HepG2 (cell line): ENCODE measurements at regions of chr9 and their contacts with region 1.

Region 1: DNA sequence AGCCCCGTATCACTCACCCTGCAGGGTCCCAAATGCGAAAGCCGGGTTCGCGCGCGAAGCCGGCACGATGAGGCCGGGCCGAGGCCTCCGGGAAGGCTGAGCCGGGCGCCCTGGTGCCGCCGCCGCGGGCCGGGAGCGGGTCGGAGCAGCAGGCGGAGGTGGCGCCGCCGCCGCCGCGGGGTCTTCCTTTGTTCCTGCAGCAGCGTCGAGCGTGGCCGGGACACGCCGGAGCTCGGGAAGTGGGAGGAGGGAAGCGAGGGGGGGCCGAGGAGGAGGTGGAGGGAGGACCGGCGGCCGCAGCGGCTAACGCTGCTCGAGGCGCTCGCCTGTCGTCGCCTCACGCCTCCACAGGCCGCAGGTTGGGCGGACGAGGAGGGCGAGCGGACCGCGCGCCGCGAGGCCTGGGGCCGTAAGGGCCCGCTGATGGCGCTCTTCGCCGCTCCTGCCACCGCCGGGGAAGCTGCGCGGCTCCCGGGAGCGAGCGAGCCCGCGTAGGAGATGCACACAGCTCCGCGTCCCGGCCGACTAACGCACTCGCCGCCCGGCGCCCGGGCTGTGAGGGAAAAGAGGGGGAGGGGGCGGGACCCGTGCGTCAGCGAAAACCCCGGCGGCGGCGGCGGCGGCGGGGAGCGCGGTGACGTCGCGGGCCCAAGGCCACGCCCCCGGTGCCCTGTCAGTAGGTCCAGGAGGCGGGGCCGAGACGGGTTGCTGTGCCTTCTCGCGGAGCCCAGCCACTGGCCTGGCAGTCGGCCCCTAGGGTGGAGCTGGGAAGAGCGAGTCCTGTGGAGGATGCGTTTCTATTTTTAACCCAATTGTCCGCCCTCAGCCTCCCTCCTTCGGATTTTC is at the start of gene ZFAND5:
- DNase-seq: peak; percentile 89
- ATAC-seq: peak; percentile 91
- H3K4me3 ChIP-seq: peak within 1 kb of the TSS; percentile 81 to 97 (median 95)
- H3K27ac ChIP-seq: peak within 1 kb of the TSS; percentile 99
- H3K4me1 ChIP-seq: peaks cover 54% of the 10 kb centered on the region
- H3K27me3 ChIP-seq: no peaks in the 10 kb centered on the region; a peak in 1 of 5 replicates
- CTCF ChIP-seq: no peak
- EP300 ChIP-seq: 0 out of 4 replicates have a peak, but pooled peaks of 1 of the 2 experiments have one; percentile 32
- POLR2A ChIP-seq: peak; percentile 99
- RAD21 ChIP-seq: peak; percentile 55
- total RNA-seq, gene ZFAND5: 41.8 and 60.2 TPM in 2 replicates

Region 2: GRCh38 chr9:71911253-71912074 is 453.4 kb before region 1 on chr9 and contains the start of gene C9orf85:
- CTCF ChIA-PET with region 1: no interaction called
- POLR2A ChIA-PET with region 1: interaction called, 8 read pairs
- in situ Hi-C with region 1: no loop called
- intact Hi-C with region 1: loop called (anchors 5 kb)
- DNase-seq: peak; percentile 100
- ATAC-seq: peak; percentile 86
- H3K4me3 ChIP-seq: peak within 1 kb of the TSS; percentile 86 to 99 (median 89)
- H3K27ac ChIP-seq: peak within 1 kb of the TSS; percentile 93
- H3K4me1 ChIP-seq: peaks cover 47% of the 10 kb centered on the region
- H3K27me3 ChIP-seq: no peaks in the 10 kb centered on the region; a peak in 1 of 5 replicates
- CTCF ChIP-seq: no peak
- EP300 ChIP-seq: peak; percentile 7 to 41; a peak in 2 of 4 replicates
- POLR2A ChIP-seq: peak in 1 of 2 experiments; percentile 24; a peak in 1 of 4 replicates
- RAD21 ChIP-seq: no peak
- total RNA-seq, gene C9orf85: 9.9 and 10.1 TPM in 2 replicates

Region 3: DNA sequence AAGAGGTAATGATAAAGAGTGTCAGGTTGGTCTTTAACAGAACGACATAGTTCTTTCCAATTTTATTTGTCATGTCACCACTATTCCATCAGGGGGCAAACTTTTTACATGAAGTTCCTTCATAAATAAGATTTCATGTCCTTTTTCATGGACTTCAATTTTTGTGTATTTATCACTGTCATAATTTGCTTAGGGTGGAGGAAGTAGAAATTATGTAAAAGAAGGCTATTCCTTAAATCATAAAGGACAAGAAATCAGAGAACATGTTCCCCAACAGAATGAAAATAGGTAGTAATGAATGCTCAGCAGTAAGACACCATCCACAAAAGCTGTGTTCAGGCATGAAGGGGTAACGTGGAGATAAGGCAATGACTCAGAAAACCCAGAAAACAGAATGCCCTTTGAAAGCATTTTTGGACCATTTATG is 72.6 kb before region 1 on chr9:
- CTCF ChIA-PET with region 1: no interaction called
- POLR2A ChIA-PET with region 1: interaction called, 6 read pairs
- in situ Hi-C with region 1: no loop called
- intact Hi-C with region 1: loop called (anchors 2 kb)
- DNase-seq: peak; percentile 30
- ATAC-seq: no peak
- H3K4me3 ChIP-seq: no peak overlapping the region
- H3K27ac ChIP-seq: no peak overlapping the region
- H3K4me1 ChIP-seq: peaks cover 12% of the 10 kb centered on the region
- H3K27me3 ChIP-seq: no peaks in the 10 kb centered on the region
- CTCF ChIP-seq: peak; percentile 52
- EP300 ChIP-seq: no peak
- POLR2A ChIP-seq: no peak
- RAD21 ChIP-seq: no peak

Region 4: GRCh38 chr9:72322259-72322658 is 42.6 kb before region 1 on chr9:
- CTCF ChIA-PET with region 1: no interaction called
- POLR2A ChIA-PET with region 1: no interaction called
- in situ Hi-C with region 1: no loop called
- intact Hi-C with region 1: no loop called
- DNase-seq: no peak
- ATAC-seq: no peak
- H3K4me3 ChIP-seq: no peak overlapping the region
- H3K27ac ChIP-seq: no peak overlapping the region
- H3K4me1 ChIP-seq: peaks cover 9% of the 10 kb centered on the region; the same call in 1 of the 2 replicates
- H3K27me3 ChIP-seq: no peaks in the 10 kb centered on the region
- CTCF ChIP-seq: no peak
- EP300 ChIP-seq: no peak
- POLR2A ChIP-seq: no peak
- RAD21 ChIP-seq: no peak

Region 5: GRCh38 chr9:72333709-72334108 is 31.2 kb before region 1 on chr9:
- CTCF ChIA-PET with region 1: no interaction called
- POLR2A ChIA-PET with region 1: no interaction called
- in situ Hi-C with region 1: no loop called
- intact Hi-C with region 1: no loop called
- DNase-seq: no peak
- ATAC-seq: no peak
- H3K4me3 ChIP-seq: no peak overlapping the region
- H3K27ac ChIP-seq: no peak overlapping the region
- H3K4me1 ChIP-seq: no peaks in the 10 kb centered on the region
- H3K27me3 ChIP-seq: 0 out of 5 replicates have a peak, but pooled peaks cover 0 to 2% of the 10 kb centered on the region in 2 experiments
- CTCF ChIP-seq: peak; percentile 37; the same call in 1 of the 2 replicates
- EP300 ChIP-seq: no peak
- POLR2A ChIP-seq: no peak
- RAD21 ChIP-seq: no peak

Region 6: GRCh38 chr9:72460342-72461312 is 95.7 kb after region 1 on chr9:
- CTCF ChIA-PET with region 1: no interaction called
- POLR2A ChIA-PET with region 1: interaction called, 12 read pairs
- in situ Hi-C with region 1: no loop called
- intact Hi-C with region 1: no loop called
- DNase-seq: no peak
- ATAC-seq: no peak
- H3K4me3 ChIP-seq: no peak overlapping the region
- H3K27ac ChIP-seq: no peak overlapping the region
- H3K4me1 ChIP-seq: peaks cover 29% of the 10 kb centered on the region
- H3K27me3 ChIP-seq: no peaks in the 10 kb centered on the region
- CTCF ChIP-seq: no peak
- EP300 ChIP-seq: no peak
- POLR2A ChIP-seq: no peak
- RAD21 ChIP-seq: no peak

Region 7: DNA sequence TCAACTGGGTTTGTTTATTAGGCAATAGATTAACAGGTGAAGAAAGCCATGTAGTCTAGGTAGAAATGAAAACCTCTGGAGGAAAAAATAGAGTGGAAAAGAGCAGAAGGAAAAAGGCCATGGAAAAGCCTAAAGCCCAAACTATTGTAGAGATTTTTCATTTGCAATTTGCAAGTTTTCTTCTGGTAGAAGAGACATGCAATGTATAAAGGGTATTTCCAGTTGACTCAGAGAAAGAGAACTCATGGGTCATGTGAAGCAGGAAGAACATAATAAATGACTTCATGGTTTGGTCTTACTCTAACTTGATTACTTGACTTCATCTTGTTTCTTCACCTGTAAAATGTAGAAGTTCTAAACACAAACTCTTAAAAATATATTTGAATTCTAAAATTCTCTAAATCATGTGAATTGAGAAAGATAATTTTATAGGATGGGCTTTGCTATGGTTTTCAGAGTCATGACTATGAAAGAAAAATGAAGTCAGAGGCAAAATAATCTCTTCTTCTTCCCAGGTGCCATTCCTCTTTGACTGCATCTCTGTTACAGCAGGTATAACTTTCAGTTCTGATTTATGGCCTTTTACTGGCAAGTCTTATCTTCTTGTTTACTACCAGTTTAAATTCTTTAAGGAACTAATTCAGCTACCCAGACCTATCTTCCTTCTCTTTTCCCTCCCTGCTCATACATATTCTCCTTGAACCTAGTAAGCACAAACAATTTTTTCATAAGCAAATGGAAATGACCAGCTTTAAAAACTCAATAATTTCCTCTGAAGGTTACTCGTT is 108.8 kb after region 1 on chr9:
- CTCF ChIA-PET with region 1: no interaction called
- POLR2A ChIA-PET with region 1: interaction called, 7 read pairs
- in situ Hi-C with region 1: no loop called
- intact Hi-C with region 1: loop called (anchors 5 kb)
- DNase-seq: no peak
- ATAC-seq: no peak
- H3K4me3 ChIP-seq: no peak overlapping the region
- H3K27ac ChIP-seq: no peak overlapping the region
- H3K4me1 ChIP-seq: peaks cover 19% of the 10 kb centered on the region
- H3K27me3 ChIP-seq: no peaks in the 10 kb centered on the region
- CTCF ChIP-seq: no peak
- EP300 ChIP-seq: no peak
- POLR2A ChIP-seq: no peak
- RAD21 ChIP-seq: no peak

Region 8: DNA sequence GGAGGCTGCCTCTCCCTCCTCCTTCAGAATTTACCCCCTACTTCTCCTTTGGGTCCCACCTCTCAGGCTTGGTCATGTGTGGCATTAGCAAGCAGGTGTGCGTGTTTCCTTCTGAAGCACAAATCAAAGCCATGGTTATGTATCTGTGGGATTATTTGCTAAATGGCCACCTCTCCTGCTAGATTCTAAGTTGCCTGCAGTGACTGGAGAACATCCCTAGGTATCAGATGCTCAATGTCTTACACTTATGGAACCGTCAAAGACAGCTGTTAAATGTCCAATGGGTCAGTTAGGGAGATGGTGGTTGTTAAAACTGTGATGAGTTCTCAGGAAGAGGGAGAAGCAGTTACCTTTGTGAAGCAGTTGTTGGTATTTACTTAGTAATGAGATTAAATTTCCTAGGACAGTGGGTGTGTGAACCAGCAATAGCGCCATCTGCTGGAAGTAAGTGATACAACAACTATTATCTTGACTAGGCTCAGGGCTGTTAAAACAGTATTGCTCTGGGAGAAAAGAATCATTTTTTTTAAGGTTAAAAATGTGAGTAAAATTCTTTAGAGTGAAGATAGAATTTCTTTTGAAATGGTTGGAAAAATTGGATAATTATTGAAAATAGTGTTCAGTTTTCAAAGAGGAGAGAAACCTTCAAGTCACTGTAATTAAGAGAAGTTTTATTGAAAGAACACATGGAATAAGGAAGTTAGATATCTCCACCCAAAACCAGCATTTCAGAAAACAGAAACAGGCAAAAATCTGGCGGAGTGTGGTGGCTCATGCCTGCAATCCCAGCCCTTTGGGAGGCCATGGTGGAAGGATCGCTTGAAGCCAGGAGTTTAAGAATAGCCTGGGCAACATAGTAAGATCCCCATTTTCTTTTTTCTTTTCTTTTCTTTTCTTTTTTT is 227.9 kb after region 1 on chr9:
- CTCF ChIA-PET with region 1: no interaction called
- POLR2A ChIA-PET with region 1: interaction called, 5 read pairs
- in situ Hi-C with region 1: no loop called
- intact Hi-C with region 1: loop called (anchors 1 kb)
- DNase-seq: peak; percentile 30
- ATAC-seq: peak; percentile 89
- H3K4me3 ChIP-seq: no peak overlapping the region
- H3K27ac ChIP-seq: no peak overlapping the region
- H3K4me1 ChIP-seq: no peaks in the 10 kb centered on the region
- H3K27me3 ChIP-seq: no peaks in the 10 kb centered on the region; a peak in 1 of 5 replicates
- CTCF ChIP-seq: peak; percentile 78
- EP300 ChIP-seq: no peak
- POLR2A ChIP-seq: no peak
- RAD21 ChIP-seq: peak; percentile 66

Region 9: DNA sequence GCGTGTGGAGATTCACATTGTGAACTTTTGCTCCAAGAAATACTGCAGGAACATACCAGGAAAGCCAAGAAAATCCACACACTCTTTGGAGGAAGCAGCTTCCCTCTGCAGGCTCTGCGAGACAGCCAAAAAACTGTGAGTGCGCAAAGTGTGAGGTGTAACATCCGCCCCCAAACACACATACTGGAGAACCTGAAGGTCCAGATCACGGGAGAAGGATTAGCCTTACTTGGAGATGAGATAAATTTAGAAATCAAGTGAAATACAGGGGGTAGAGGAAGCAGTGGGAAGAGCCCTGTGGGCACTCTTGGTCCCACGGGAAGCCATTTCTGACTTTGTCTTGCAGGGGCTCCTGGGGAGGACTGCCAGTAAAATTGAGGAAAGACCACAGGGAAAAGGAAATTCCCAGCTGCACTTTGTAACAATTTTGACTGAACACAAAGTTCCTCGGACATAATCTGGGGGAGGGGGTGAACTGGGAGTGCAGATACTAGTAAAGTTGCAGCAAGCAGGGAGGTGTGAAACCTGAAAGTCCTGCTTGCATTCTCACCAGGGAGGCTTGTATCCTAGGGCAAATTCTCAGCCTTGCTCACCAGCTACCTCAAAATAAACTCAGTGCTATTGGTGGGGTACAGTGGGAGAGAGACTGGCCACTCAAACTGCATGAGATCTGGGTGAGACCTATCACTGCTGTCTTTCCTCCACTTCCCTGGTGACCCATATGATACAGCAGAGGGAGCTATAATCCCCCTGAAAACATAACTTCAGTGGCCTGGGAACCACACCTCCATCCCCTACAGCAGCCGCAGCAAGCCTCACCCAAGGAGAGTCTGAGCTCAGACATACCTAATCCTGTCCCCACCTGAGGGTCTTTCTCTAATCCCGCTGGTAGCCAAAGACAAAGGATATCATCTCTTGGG is 478.9 kb after region 1 on chr9:
- CTCF ChIA-PET with region 1: no interaction called
- POLR2A ChIA-PET with region 1: interaction called, 4 read pairs
- in situ Hi-C with region 1: loop called (anchors 10 kb)
- intact Hi-C with region 1: no loop called
- DNase-seq: peak; percentile 74
- ATAC-seq: peak; percentile 100
- H3K4me3 ChIP-seq: peak overlapping the region; percentile 32 to 49 (median 40)
- H3K27ac ChIP-seq: peak overlapping the region; percentile 31
- H3K4me1 ChIP-seq: peaks cover 22% of the 10 kb centered on the region
- H3K27me3 ChIP-seq: no peaks in the 10 kb centered on the region
- CTCF ChIP-seq: peak; percentile 82
- EP300 ChIP-seq: no peak
- POLR2A ChIP-seq: no peak
- RAD21 ChIP-seq: peak; percentile 73; the same call in 1 of the 2 replicates